ENCODE measurements at regions of chr19 and their contacts with region 1.

Region 1: GRCh38 chr19:39156326-39157230 is 31.0 kb downstream of the PAK4 start:
- DNase-seq: no peak
- H3K4me3 ChIP-seq: no peak overlapping the region
- H3K27ac ChIP-seq: no peak overlapping the region
- H3K4me1 ChIP-seq: peaks cover 4 to 39% (median 20%) of the 10 kb centered on the region in 4 experiments
- H3K27me3 ChIP-seq: peaks cover 0 to 1% (median 0%) of the 10 kb centered on the region in 4 experiments; a peak in 1 of 7 replicates
- CTCF ChIP-seq: no peak
- EP300 ChIP-seq: no peak
- POLR2A ChIP-seq: no peak
- RAD21 ChIP-seq: no peak

Region 2: DNA sequence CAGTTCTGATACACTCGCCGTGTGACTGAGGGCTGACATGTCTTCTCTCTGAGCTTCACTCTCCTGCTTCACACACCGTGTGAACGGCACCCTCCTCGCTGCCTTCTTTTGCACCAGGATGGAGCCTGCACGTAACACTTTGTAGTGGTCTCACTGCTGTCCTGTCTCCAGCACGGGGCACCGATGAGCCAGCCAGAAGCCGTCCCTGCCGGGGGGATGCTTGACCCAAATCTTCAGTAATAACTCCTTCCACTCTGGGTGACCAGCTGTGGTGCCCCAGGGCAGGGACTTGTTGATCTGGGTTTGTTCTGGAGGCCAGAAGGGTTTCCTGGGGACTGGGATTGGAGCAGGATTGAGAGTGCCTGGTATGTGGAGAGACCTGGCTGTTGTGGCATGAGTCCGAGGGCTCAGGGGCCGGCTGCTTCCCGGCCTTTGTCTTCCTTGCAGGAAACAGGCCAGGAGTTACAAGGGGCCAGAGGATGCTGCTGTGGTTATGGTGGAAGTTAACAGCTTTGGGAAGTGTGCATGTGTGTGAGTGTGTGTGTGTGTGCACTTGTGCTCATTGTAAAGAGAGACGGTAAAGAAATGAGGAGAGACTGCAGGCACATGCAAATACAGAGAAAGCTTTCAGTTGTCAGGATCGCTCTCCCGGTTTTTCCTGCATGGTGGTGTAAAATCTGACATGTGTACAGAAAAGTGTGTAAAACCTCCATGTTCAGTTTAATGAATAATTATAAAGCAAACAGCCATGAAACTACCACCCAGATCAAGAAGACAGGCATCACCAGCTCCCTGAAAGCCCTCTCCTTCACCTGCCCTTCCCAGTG is 12.1 kb before region 1 on chr19:
- CTCF ChIA-PET with region 1: interaction called, 22 read pairs
- POLR2A ChIA-PET with region 1: interaction called, 9 read pairs
- DNase-seq: no peak
- H3K4me3 ChIP-seq: no peak overlapping the region
- H3K27ac ChIP-seq: no peak overlapping the region
- H3K4me1 ChIP-seq: peaks cover 26 to 52% (median 36%) of the 10 kb centered on the region in 4 experiments
- H3K27me3 ChIP-seq: no peaks in the 10 kb centered on the region
- CTCF ChIP-seq: peak in 1 of 3 experiments; percentile 7; a peak in 1 of 4 replicates
- EP300 ChIP-seq: no peak
- POLR2A ChIP-seq: no peak
- RAD21 ChIP-seq: peak; percentile 19 to 23; a peak in 2 of 4 replicates

Measured in H1 (cell line).